ENCODE measurements at regions of chr10 and their contacts with region 1.

Region 1: DNA sequence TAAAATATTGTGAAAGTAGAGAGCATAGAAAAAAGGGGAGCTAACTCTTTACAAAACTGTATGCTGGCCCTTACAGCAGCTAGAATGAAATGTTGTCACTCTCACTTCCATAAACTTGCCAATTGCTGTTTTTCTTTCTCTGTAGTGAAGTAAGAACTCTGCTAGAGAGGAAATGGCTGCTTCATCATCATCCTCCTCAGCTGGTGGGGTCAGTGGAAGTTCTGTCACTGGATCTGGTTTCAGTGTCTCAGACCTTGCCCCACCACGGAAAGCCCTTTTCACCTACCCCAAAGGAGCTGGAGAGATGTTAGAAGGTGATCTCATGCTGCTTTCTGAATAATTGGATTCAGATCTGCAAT is 7.6 kb upstream of the ASCC1 start:
- DNase-seq: no peak
- CTCF ChIP-seq: no peak

Region 2: GRCh38 chr10:72234560-72235095 is 10.9 kb after region 1 on chr10:
- CTCF ChIA-PET with region 1: interaction called, 13 read pairs
- POLR2A ChIA-PET with region 1: no interaction called
- DNase-seq: no peak
- CTCF ChIP-seq: no peak

Region 3: GRCh38 chr10:73552819-73553715 is 1329.3 kb after region 1 on chr10:
- CTCF ChIA-PET with region 1: no interaction called
- POLR2A ChIA-PET with region 1: no interaction called
- DNase-seq: no peak
- CTCF ChIP-seq: no peak